CD8-positive, alpha-beta T cell (primary cell): ENCODE measurements at regions of chr5 and their contacts with region 1.

Region 1: GRCh38 chr5:81288021-81288433 is 13.4 kb upstream of the ZCCHC9 start:
- DNase-seq: no peak
- ATAC-seq: no peak
- H3K4me3 ChIP-seq: no peak overlapping the region
- H3K4me3 Mint-ChIP-seq: no peak overlapping the region
- H3K27ac ChIP-seq: no peak overlapping the region
- H3K27ac Mint-ChIP-seq: no peak overlapping the region
- H3K4me1 ChIP-seq: peaks cover 7% of the 10 kb centered on the region
- H3K4me1 Mint-ChIP-seq: peaks cover 57% of the 10 kb centered on the region
- H3K27me3 ChIP-seq: no peaks in the 10 kb centered on the region
- H3K27me3 Mint-ChIP-seq: no peaks in the 10 kb centered on the region
- CTCF ChIP-seq: no peak

Region 2: DNA sequence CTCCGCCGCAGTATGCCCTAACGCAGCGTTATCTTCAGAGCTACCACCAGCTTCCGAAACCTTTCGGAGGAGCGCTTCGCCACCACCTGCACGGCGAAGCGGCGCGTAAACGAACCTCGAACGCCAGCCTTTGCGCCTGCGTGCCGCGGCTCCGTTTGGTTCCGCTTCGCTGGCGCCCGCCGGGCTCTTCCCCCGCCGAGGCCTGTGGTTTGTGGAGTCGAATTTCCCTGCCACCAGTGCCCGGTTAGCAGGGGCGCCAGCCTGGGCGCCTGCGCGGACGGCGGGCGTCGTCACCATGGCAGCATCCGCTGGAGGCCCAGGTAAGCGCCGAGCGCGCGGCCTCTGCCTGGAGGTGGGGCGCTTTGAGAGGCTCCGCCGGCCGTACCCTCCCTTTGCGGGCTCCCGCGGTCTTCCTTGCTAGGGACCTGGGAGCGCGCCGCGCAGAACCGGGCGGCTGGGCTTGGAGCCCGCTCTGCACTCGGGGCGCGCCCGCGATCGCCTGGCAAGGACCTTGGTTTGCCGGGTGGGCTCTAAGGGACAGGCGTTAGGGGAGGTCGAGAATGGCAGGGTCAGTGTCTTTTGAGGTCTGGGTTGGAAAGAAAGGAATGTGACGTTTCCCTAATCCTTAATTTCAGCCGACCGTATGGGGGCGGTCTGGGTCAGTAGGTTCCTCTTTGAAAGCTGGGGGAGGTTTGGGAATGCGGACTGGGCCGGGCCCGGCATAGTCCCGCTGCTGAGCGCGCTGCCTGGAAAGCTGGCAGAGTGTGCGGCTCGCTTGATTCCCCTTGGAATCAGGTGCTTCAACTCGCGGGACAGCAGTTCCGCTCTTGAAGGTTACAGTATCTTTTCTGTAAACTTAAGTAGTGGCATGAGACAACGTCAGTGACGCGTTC is 800.0 kb before region 1 on chr5 and contains the start of gene FAM151B:
- CTCF ChIA-PET with region 1: no interaction called
- POLR2A ChIA-PET with region 1: no interaction called
- intact Hi-C with region 1: loop called in 1 of 2 experiments (anchors 10 kb)
- DNase-seq: peak; percentile 5 to 80 (median 61)
- ATAC-seq: peak; percentile 83
- H3K4me3 ChIP-seq: peak within 1 kb of the TSS; percentile 46 to 68
- H3K4me3 Mint-ChIP-seq: peak within 1 kb of the TSS; percentile 81
- H3K27ac ChIP-seq: peak within 1 kb of the TSS in 1 of 2 experiments; percentile 10
- H3K27ac Mint-ChIP-seq: peak within 1 kb of the TSS; percentile 52
- H3K4me1 ChIP-seq: peaks cover 9% of the 10 kb centered on the region
- H3K4me1 Mint-ChIP-seq: peaks cover 12% of the 10 kb centered on the region
- H3K27me3 ChIP-seq: peaks cover 0 to 7% of the 10 kb centered on the region in 2 experiments
- H3K27me3 Mint-ChIP-seq: peaks cover 16% of the 10 kb centered on the region
- CTCF ChIP-seq: no peak
- total RNA-seq, gene FAM151B: 0.19 TPM in 1 of 2 experiments, not detected in the other